ENCODE measurements at regions of chr22 and their contacts with region 1.

Region 1: GRCh38 chr22:19143967-19144400 is 467 bp downstream of the ESS2 start:
- DNase-seq: no peak
- ATAC-seq: no peak
- H3K4me3 ChIP-seq: peak overlapping the region; percentile 78 to 96 (median 87)
- H3K4me3 Mint-ChIP-seq: peak overlapping the region; percentile 99
- H3K27ac ChIP-seq: peak overlapping the region; percentile 85 to 94
- H3K27ac Mint-ChIP-seq: peak overlapping the region; percentile 97
- H3K4me1 ChIP-seq: peaks cover 9 to 17% of the 10 kb centered on the region in 2 donors
- H3K4me1 Mint-ChIP-seq: peaks cover 16% of the 10 kb centered on the region
- H3K27me3 ChIP-seq: peaks cover 0 to 17% (median 8%) of the 10 kb centered on the region in 4 experiments
- H3K27me3 Mint-ChIP-seq: peaks cover 9% of the 10 kb centered on the region
- CTCF ChIP-seq: no peak

Region 2: DNA sequence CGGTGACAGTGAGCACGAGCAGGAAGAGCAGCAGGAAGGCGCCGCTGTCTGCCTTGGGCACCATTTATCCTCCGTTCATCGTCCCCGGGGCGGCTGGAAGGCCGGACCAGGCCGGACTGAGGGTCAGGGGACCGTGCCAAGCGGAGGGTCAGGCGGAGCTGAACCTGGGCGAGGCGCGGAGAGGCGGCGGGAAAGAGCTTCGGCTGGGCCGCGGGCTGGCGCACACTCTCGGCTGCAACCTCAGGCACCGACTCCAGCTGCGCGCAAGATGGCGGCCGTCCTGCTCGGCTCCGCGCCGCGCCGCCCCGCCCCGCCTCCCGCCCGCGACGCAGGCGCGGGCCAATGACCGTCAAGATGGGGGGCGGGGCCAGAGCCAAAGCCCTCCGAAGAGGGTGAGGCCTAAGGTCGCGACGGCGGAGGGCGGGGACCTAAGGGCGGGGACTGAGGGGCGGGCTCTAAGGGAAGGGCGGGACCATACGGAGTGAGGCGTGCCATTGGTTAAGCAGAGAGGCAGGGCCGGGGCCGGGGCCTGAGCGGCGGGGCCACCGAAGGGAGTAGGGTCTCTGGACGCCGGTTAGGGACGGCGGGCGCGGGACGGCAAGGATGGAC is 21.7 kb before region 1 on chr22 and contains the start of gene DGCR2:
- CTCF ChIA-PET with region 1: interaction called, 9 read pairs
- POLR2A ChIA-PET with region 1: interaction called, 20 read pairs
- intact Hi-C with region 1: loop called (anchors 1 kb)
- DNase-seq: peak; percentile 97
- ATAC-seq: peak; percentile 97
- H3K4me3 ChIP-seq: peak within 1 kb of the TSS; percentile 67 to 93 (median 83)
- H3K4me3 Mint-ChIP-seq: peak within 1 kb of the TSS; percentile 94
- H3K27ac ChIP-seq: peak within 1 kb of the TSS; percentile 63 to 76
- H3K27ac Mint-ChIP-seq: peak within 1 kb of the TSS; percentile 88
- H3K4me1 ChIP-seq: peaks cover 46 to 49% of the 10 kb centered on the region in 2 donors
- H3K4me1 Mint-ChIP-seq: peaks cover 45% of the 10 kb centered on the region
- H3K27me3 ChIP-seq: no peaks in the 10 kb centered on the region
- H3K27me3 Mint-ChIP-seq: no peaks in the 10 kb centered on the region
- CTCF ChIP-seq: no peak
- total RNA-seq, gene DGCR2: 49.5 and 50.4 TPM in 2 replicates

Region 3: GRCh38 chr22:19291580-19292457 is 147.8 kb after region 1 on chr22 and contains the start of gene CLTCL1:
- CTCF ChIA-PET with region 1: interaction called, 4 read pairs
- POLR2A ChIA-PET with region 1: no interaction called
- intact Hi-C with region 1: loop called (anchors 1 kb)
- DNase-seq: peak; percentile 87
- ATAC-seq: peak; percentile 83
- H3K4me3 ChIP-seq: peak within 1 kb of the TSS; percentile 64 to 88 (median 84)
- H3K4me3 Mint-ChIP-seq: peak within 1 kb of the TSS; percentile 97
- H3K27ac ChIP-seq: peak within 1 kb of the TSS; percentile 75 to 77
- H3K27ac Mint-ChIP-seq: peak within 1 kb of the TSS; percentile 94
- H3K4me1 ChIP-seq: peaks cover 15 to 17% of the 10 kb centered on the region in 2 donors
- H3K4me1 Mint-ChIP-seq: peaks cover 24% of the 10 kb centered on the region
- H3K27me3 ChIP-seq: peaks cover 0 to 13% (median 3%) of the 10 kb centered on the region in 4 experiments
- H3K27me3 Mint-ChIP-seq: peaks cover 18% of the 10 kb centered on the region
- CTCF ChIP-seq: no peak
- total RNA-seq, gene CLTCL1: 5.2 and 5.5 TPM in 2 replicates

Region 4: DNA sequence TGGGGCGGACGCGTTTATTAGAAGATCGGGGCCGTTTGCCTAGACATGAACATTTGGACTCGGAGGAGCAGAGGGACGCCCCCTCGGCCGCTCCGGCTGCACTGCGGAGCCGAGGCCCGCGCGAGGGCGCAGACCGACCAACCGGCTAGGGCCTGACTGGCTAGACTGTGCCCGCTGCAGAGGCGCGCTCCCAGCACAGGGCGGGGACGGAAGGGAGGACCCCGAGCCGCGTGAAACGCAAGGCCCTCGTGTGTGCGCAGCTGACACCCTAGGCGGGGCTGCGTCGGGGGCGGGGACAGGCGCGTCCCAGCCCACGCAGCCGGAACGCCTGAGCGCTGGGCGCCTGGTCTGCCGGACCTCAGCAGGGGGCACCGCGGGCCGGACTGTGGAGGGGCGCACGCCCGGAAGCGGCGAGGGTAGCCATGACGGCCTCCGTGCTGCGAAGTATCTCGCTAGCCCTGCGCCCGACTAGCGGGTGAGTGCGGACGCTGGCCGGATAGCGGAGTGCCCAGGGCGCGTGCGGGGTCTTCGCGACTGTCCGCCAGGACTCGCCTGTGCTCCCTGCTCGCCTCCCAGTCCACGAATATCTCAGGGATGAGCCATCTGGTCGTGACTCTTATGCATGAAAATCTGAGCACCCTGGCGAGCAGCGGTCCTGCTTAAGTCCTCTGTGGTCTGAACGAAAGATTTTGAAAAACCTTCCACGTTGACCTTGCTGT is 288.3 kb after region 1 on chr22 and contains the start of gene MRPL40:
- CTCF ChIA-PET with region 1: interaction called, 4 read pairs
- POLR2A ChIA-PET with region 1: interaction called, 3 read pairs
- intact Hi-C with region 1: loop called (anchors 2 kb)
- DNase-seq: peak; percentile 90
- ATAC-seq: peak; percentile 87
- H3K4me3 ChIP-seq: peak within 1 kb of the TSS; percentile 73 to 90 (median 85)
- H3K4me3 Mint-ChIP-seq: peak within 1 kb of the TSS; percentile 93
- H3K27ac ChIP-seq: peak within 1 kb of the TSS; percentile 91 to 97
- H3K27ac Mint-ChIP-seq: peak within 1 kb of the TSS; percentile 98
- H3K4me1 ChIP-seq: peaks cover 46 to 63% of the 10 kb centered on the region in 2 donors
- H3K4me1 Mint-ChIP-seq: peaks cover 62% of the 10 kb centered on the region
- H3K27me3 ChIP-seq: no peaks in the 10 kb centered on the region
- H3K27me3 Mint-ChIP-seq: no peaks in the 10 kb centered on the region
- CTCF ChIP-seq: no peak
- total RNA-seq, gene MRPL40: 18.0 and 21.9 TPM in 2 replicates

Region 5: GRCh38 chr22:19629720-19630419 is 485.9 kb after region 1 on chr22:
- CTCF ChIA-PET with region 1: interaction called, 73 read pairs
- POLR2A ChIA-PET with region 1: interaction called, 7 read pairs
- intact Hi-C with region 1: loop called (anchors 1 kb)
- DNase-seq: peak; percentile 86
- ATAC-seq: peak; percentile 95
- H3K4me3 ChIP-seq: no peak overlapping the region
- H3K4me3 Mint-ChIP-seq: no peak overlapping the region
- H3K27ac ChIP-seq: no peak overlapping the region
- H3K27ac Mint-ChIP-seq: no peak overlapping the region
- H3K4me1 ChIP-seq: no peaks in the 10 kb centered on the region
- H3K4me1 Mint-ChIP-seq: no peaks in the 10 kb centered on the region
- H3K27me3 ChIP-seq: peaks cover 0 to 24% (median 4%) of the 10 kb centered on the region in 4 experiments
- H3K27me3 Mint-ChIP-seq: peaks cover 40% of the 10 kb centered on the region
- CTCF ChIP-seq: peak; percentile 96